ENCODE measurements at regions of chr6 and their contacts with region 1.

Region 1: GRCh38 chr6:10694302-10695085 is at the starts of genes C6orf52 and PAK1IP1:
- DNase-seq: peak; percentile 96
- ATAC-seq: peak; percentile 97
- H3K4me3 Mint-ChIP-seq: peak within 1 kb of the TSS; percentile 90
- H3K27ac Mint-ChIP-seq: peak within 1 kb of the TSS; percentile 99
- H3K4me1 Mint-ChIP-seq: peaks cover 31% of the 10 kb centered on the region
- H3K27me3 Mint-ChIP-seq: no peaks in the 10 kb centered on the region
- CTCF ChIP-seq: no peak
- total RNA-seq, gene C6orf52: 2.6 to 3.3 TPM
- total RNA-seq, gene PAK1IP1: 34.2 to 35.5 TPM

Region 2: GRCh38 chr6:10014557-10014956 is 679.9 kb before region 1 on chr6:
- CTCF ChIA-PET with region 1: no interaction called
- POLR2A ChIA-PET with region 1: no interaction called
- intact Hi-C with region 1: no loop called
- DNase-seq: no peak
- ATAC-seq: no peak
- H3K4me3 Mint-ChIP-seq: no peak overlapping the region
- H3K27ac Mint-ChIP-seq: no peak overlapping the region
- H3K4me1 Mint-ChIP-seq: no peaks in the 10 kb centered on the region
- H3K27me3 Mint-ChIP-seq: no peaks in the 10 kb centered on the region
- CTCF ChIP-seq: no peak

Region 3: GRCh38 chr6:10528170-10528981 is 166.1 kb before region 1 on chr6:
- CTCF ChIA-PET with region 1: no interaction called
- POLR2A ChIA-PET with region 1: no interaction called
- intact Hi-C with region 1: loop called (anchors 5 kb)
- DNase-seq: peak; percentile 48
- ATAC-seq: peak; percentile 76
- H3K4me3 Mint-ChIP-seq: peak overlapping the region; percentile 86
- H3K27ac Mint-ChIP-seq: peak overlapping the region; percentile 71
- H3K4me1 Mint-ChIP-seq: peaks cover 54% of the 10 kb centered on the region
- H3K27me3 Mint-ChIP-seq: peaks cover 6% of the 10 kb centered on the region
- CTCF ChIP-seq: no peak

Region 4: GRCh38 chr6:10722820-10723566 is 28.5 kb after region 1 on chr6 and contains the start of gene TMEM14C:
- CTCF ChIA-PET with region 1: interaction called, 7 read pairs
- POLR2A ChIA-PET with region 1: interaction called, 21 read pairs
- intact Hi-C with region 1: no loop called
- DNase-seq: peak; percentile 93
- ATAC-seq: peak; percentile 93
- H3K4me3 Mint-ChIP-seq: peak within 1 kb of the TSS; percentile 91
- H3K27ac Mint-ChIP-seq: peak within 1 kb of the TSS; percentile 92
- H3K4me1 Mint-ChIP-seq: peaks cover 45% of the 10 kb centered on the region
- H3K27me3 Mint-ChIP-seq: no peaks in the 10 kb centered on the region
- CTCF ChIP-seq: no peak
- total RNA-seq, gene TMEM14C: 60.1 to 62.0 TPM

Region 5: GRCh38 chr6:10747251-10747972 is 52.9 kb after region 1 on chr6 and contains the start of gene TMEM14B:
- CTCF ChIA-PET with region 1: no interaction called
- POLR2A ChIA-PET with region 1: interaction called, 11 read pairs
- intact Hi-C with region 1: loop called (anchors 2 kb)
- DNase-seq: peak; percentile 100
- ATAC-seq: peak; percentile 99
- H3K4me3 Mint-ChIP-seq: peak within 1 kb of the TSS; percentile 95
- H3K27ac Mint-ChIP-seq: peak within 1 kb of the TSS; percentile 95
- H3K4me1 Mint-ChIP-seq: peaks cover 42% of the 10 kb centered on the region
- H3K27me3 Mint-ChIP-seq: no peaks in the 10 kb centered on the region
- CTCF ChIP-seq: no peak
- total RNA-seq, gene TMEM14B: 92.1 to 94.2 TPM

Measured in activated CD8-positive, alpha-beta T cell treated with anti-CD3 and anti-CD28 coated beads for 36 hours (primary cell).